Caco-2 (cell line): ENCODE measurements at regions of chr3 and their contacts with region 1.

Region 1: GRCh38 chr3:53850895-53851294 is 4.5 kb downstream of the IL17RB start:
- DNase-seq: no peak
- H3K4me3 ChIP-seq: no peak overlapping the region
- H3K4me3 Mint-ChIP-seq: no peak overlapping the region
- H3K27ac Mint-ChIP-seq: no peak overlapping the region
- H3K4me1 ChIP-seq: no peaks in the 10 kb centered on the region
- H3K4me1 Mint-ChIP-seq: peaks cover 8% of the 10 kb centered on the region
- H3K27me3 ChIP-seq: no peaks in the 10 kb centered on the region
- H3K27me3 Mint-ChIP-seq: no peaks in the 10 kb centered on the region
- CTCF ChIP-seq: no peak

Region 2: GRCh38 chr3:53744351-53744750 is 106.5 kb before region 1 on chr3:
- CTCF ChIA-PET with region 1: no interaction called
- POLR2A ChIA-PET with region 1: interaction called, 12 read pairs
- intact Hi-C with region 1: no loop called
- DNase-seq: peak in 1 of 2 experiments; percentile 23
- H3K4me3 ChIP-seq: no peak overlapping the region
- H3K4me3 Mint-ChIP-seq: no peak overlapping the region
- H3K27ac Mint-ChIP-seq: no peak overlapping the region
- H3K4me1 ChIP-seq: no peaks in the 10 kb centered on the region
- H3K4me1 Mint-ChIP-seq: no peaks in the 10 kb centered on the region
- H3K27me3 ChIP-seq: no peaks in the 10 kb centered on the region
- H3K27me3 Mint-ChIP-seq: no peaks in the 10 kb centered on the region
- CTCF ChIP-seq: peak in 1 of 2 experiments; percentile 22